ENCODE measurements at regions of chr11 and their contacts with region 1.

Region 1: DNA sequence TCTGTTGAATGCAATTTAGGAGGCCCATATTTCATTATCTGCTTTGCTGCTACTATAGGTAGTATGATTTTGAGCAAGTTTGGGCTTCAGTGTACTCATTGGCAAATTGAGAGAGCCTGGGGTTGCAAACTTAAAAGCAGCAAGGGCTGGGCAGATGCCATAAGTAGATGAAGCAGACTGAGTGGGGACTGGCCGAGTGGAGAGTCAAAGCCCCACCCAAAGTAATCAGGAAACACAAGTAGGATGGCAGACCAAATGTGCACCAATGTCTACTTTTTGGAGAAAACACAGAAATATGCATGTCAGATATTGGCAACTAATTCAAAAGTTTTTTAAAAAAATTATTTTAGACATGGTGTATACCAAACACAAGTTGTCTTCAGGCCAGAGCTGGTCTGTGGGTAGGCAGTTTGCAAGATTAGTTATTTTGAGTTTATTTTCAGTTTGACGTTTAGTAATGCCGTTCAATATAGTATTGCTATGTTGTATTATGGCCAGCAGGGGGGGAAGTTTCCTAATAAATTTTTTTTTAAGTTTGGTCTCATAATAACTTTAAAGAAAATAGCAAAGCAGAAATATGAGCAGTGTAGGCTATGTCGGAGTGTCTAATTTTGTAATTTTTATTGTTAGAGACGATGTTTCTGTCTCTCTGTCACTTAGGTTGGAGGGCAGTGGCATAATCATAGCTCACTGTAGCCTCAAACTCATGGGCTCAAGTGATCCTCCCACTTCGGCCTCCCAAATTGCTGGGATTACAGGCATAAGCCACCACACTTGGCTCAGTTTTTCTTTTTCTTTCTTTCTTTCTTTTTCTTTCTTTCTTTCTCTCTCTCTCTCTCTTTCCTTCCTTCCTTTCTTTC is 105.1 kb downstream of the HIPK3 start:
- DNase-seq: no peak
- ATAC-seq: peak; percentile 79
- H3K4me3 ChIP-seq: no peak overlapping the region
- H3K27ac ChIP-seq: no peak overlapping the region
- H3K4me1 ChIP-seq: no peaks in the 10 kb centered on the region; the same call in 1 of the 2 replicates
- H3K27me3 ChIP-seq: no peaks in the 10 kb centered on the region
- CTCF ChIP-seq: peak; percentile 70

Region 2: GRCh38 chr11:33531743-33532181 is 169.5 kb after region 1 on chr11:
- CTCF ChIA-PET with region 1: no interaction called
- POLR2A ChIA-PET with region 1: no interaction called
- in situ Hi-C with region 1: no loop called
- intact Hi-C with region 1: loop called (anchors 10 kb)
- DNase-seq: no peak
- ATAC-seq: 0 out of 2 replicates have a peak, but pooled peaks have one; percentile 38
- H3K4me3 ChIP-seq: no peak overlapping the region
- H3K27ac ChIP-seq: no peak overlapping the region
- H3K4me1 ChIP-seq: no peaks in the 10 kb centered on the region
- H3K27me3 ChIP-seq: no peaks in the 10 kb centered on the region
- CTCF ChIP-seq: no peak

Region 3: GRCh38 chr11:33742249-33742851 is 380.1 kb after region 1 on chr11:
- CTCF ChIA-PET with region 1: interaction called, 4 read pairs
- POLR2A ChIA-PET with region 1: no interaction called
- in situ Hi-C with region 1: no loop called
- intact Hi-C with region 1: loop called (anchors 5 kb)
- DNase-seq: no peak
- ATAC-seq: peak; percentile 82
- H3K4me3 ChIP-seq: no peak overlapping the region
- H3K27ac ChIP-seq: peak overlapping the region; percentile 32; the same call in 1 of the 2 replicates
- H3K4me1 ChIP-seq: peaks cover 15% of the 10 kb centered on the region
- H3K27me3 ChIP-seq: no peaks in the 10 kb centered on the region
- CTCF ChIP-seq: peak; percentile 65

Measured in Panc1 (cell line).